Ascending aorta (tissue), 2 donors: ENCODE measurements at regions of chr9 and their contacts with region 1.

Region 1: GRCh38 chr9:134641173-134641985 is at the start of gene COL5A1:
- DNase-seq: peak; percentile 65 to 95
- H3K4me3 ChIP-seq: peak within 1 kb of the TSS; percentile 74 to 75
- H3K27ac ChIP-seq: peak within 1 kb of the TSS; percentile 92 to 93
- H3K4me1 ChIP-seq: peaks cover 11 to 18% of the 10 kb centered on the region in 2 donors
- H3K27me3 ChIP-seq: no peaks in the 10 kb centered on the region
- CTCF ChIP-seq: peak in 2 of 3 experiments; percentile 32 to 62
- total RNA-seq, gene COL5A1: 99.6 TPM

Region 2: DNA sequence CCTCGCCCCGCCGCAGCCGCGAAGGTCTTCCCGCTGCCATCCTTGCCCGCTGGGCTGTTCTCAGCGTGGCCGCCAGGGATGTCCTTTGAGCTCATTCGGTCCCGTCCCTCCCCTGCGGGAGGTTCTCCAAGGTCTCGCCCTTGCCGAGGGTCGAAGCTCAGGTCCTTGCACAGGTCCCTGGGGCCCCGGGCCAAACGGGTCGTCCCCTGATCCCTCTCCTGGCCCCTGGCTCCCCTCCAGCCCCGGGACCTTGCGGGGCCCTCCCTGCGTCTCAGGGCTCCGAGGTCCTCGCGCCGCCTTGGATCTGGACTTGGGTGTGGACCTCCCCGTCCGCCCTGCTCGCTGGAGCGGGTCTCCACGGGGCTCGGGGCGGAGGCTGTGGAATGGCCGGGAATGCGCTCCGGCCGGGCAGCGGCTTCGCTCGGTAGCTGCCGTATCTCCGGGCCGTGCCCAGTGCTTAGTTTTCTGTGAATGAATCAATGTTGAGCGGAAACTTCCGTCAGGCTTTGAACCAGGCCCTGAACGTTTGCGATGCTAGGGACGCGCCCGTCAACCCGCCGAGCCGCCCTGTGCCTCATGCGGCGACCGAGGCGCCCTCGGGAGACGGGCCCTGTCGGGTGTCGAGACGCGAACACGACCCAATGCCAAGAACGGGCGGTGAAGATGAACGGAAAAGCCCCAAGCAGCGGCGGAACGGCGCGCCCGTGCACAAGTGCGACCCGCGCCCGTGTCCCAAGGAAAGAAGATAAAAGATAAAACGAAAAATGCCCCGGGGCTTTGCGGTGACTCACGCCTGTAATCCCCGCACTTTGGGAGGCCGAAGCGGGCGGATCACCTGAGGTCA is 477.8 kb before region 1 on chr9:
- intact Hi-C with region 1: loop called (anchors 1 kb)
- DNase-seq: peak in 1 of 2 donors; percentile 84
- H3K4me3 ChIP-seq: no peak overlapping the region
- H3K27ac ChIP-seq: no peak overlapping the region
- H3K4me1 ChIP-seq: peaks cover 8 to 16% of the 10 kb centered on the region in 2 donors
- H3K27me3 ChIP-seq: no peaks in the 10 kb centered on the region
- CTCF ChIP-seq: peak; percentile 43 to 57 (median 48)

Region 3: DNA sequence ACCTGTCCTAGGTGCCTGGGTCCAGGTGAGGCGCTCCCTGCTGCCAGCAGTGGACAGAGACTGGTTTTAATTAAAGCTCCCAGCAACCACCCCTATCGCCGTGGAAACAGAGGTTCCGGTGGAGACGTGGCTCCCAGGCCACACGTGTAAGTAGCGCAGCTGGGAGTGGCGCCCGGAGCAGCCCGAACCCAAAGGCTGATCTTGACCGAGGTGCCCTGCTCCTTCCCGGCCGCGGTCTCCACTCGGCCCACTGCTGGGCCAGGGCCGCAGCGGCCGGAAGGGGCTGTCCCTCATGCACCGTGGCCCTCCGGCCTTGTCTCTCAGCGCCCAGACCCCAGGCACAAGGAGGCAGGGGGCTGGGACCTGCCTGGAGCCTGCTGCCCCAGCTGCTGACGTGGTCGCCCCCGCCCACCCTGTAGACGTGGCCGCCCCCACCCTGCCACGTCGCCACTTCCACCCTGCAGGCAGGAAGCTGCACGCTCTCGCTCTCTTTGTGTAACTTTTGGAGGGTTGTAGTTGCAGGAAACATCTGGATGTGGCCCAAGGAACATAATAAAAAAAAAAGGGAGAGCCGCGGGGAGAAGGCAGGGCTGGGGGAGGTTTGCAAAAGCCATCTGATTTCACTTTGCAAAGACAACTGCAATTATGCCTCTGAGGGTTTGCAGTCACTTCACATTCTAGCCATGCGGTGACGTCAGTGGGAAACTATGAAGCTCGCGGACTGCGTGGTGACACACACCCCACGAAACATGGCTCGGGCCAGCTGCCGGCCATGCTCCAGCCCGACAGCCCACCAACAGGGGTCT is 185.2 kb before region 1 on chr9:
- intact Hi-C with region 1: loop called (anchors 2 kb)
- DNase-seq: peak; percentile 77 to 96
- H3K4me3 ChIP-seq: peak overlapping the region; percentile 43 to 60
- H3K27ac ChIP-seq: peak overlapping the region; percentile 86 to 97
- H3K4me1 ChIP-seq: peaks cover 4 to 32% of the 10 kb centered on the region in 2 donors
- H3K27me3 ChIP-seq: no peaks in the 10 kb centered on the region
- CTCF ChIP-seq: peak in 1 of 3 experiments; percentile 2

Region 4: GRCh38 chr9:134544388-134545214 is 96.8 kb before region 1 on chr9:
- intact Hi-C with region 1: loop called (anchors 2 kb)
- DNase-seq: peak in 1 of 2 donors; percentile 80
- H3K4me3 ChIP-seq: no peak overlapping the region
- H3K27ac ChIP-seq: peak overlapping the region in 1 of 2 donors; percentile 81
- H3K4me1 ChIP-seq: peaks cover 4 to 7% of the 10 kb centered on the region in 2 donors
- H3K27me3 ChIP-seq: no peaks in the 10 kb centered on the region
- CTCF ChIP-seq: no peak

Region 5: GRCh38 chr9:134660407-134660806 is 19.0 kb after region 1 on chr9:
- intact Hi-C with region 1: loop called (anchors 2 kb)
- DNase-seq: no peak
- H3K4me3 ChIP-seq: no peak overlapping the region
- H3K27ac ChIP-seq: peak overlapping the region; percentile 79 to 88
- H3K4me1 ChIP-seq: peaks cover 33 to 59% of the 10 kb centered on the region in 2 donors
- H3K27me3 ChIP-seq: no peaks in the 10 kb centered on the region
- CTCF ChIP-seq: peak in 2 of 3 experiments; percentile 22 to 40